Cardiac septum (tissue), 1 donor: ENCODE measurements at regions of chr3 and their contacts with region 1.

Region 1: GRCh38 chr3:174440741-174441587 is 418.2 kb upstream of the NAALADL2 start:
- DNase-seq: peak; percentile 88

Region 2: DNA sequence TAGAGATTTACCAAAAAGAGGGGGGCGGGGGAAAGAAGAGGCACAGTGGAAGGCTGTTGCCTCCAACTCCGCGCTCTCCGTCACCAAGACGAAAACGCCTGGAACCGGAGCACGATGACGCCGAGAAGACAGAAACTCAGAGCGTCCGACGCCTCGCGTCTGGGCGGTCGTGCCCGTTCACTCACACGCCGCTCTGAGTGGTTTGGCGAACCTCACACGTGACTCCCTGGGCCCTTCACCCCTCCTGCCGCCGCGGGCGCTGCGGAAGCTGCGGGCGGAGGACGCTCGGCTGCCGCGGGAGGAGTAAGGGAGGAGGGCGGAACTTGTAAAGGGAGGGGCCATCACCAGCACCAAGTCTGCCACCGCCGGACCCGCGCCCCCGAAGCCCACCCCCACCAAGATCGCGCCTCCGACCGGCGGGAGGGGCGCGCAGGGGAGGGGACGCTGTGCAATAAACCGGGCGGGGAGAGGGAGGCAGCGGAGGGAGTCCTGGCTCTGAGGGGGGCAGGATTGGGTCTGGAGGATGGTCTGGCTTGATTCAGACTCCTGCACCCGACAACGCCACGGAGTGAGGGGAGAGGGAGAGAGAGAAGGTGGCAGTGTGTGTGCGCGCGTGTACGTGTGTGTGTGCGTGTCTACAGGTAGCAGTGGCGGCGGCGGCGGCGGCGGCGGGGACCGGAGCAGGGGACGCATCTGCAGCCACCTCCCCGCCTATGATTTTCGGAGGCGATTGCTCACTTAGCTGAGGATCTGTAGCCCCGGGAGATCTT is 1045.4 kb before region 1 on chr3:
- intact Hi-C with region 1: loop called (anchors 5 kb)
- DNase-seq: peak; percentile 93

Region 3: DNA sequence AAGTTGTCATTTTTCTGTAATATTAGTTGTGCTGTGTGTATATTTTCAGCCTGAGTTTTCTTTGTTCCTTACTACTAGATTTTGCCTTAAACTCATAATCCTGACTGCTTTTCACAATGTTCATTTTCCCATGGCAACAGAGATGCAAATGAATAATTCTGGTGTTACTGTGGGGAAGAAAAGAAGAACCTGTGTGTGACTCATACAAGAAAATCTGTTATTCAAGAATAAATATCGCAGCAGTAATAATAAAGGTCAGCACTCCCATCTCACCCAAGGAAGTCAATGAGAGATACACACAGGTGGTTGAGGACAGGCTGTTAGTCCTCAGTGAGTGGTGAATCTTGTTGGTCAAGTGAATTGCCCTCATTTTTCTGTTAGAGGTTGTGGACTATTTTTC is 238.4 kb before region 1 on chr3:
- intact Hi-C with region 1: loop called (anchors 10 kb)
- DNase-seq: no peak

Region 4: DNA sequence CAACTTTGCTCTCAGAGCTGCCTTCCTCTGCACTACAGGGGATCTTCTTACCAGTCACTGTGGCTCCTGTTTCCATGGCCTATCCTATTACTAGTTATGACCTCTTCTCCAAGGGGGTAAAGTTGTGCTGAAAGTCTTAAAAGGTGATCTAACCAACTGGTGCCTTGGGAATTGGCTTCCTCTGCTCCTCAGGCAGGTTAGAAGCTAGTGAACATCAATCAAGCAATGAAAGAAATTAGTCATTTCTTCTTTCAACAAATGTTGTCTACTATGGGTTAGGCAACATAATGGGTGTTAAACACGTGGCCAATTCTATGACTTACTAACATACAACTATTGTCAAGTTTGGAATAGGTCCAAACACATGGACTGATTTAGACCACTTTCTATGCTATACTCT is 153.3 kb before region 1 on chr3:
- intact Hi-C with region 1: no loop called
- DNase-seq: no peak

Region 5: GRCh38 chr3:174618368-174619080 is 177.6 kb after region 1 on chr3:
- intact Hi-C with region 1: loop called (anchors 5 kb)
- DNase-seq: no peak